ENCODE measurements at regions of chrX and their contacts with region 1.

Region 1: GRCh38 chrX:96770315-96770714 is 85.7 kb downstream of the DIAPH2 start:
- DNase-seq: peak; percentile 11

Region 2: GRCh38 chrX:94977562-94977961 is 1792.8 kb before region 1 on chrX:
- CTCF ChIA-PET with region 1: no interaction called
- POLR2A ChIA-PET with region 1: no interaction called
- DNase-seq: no peak

Region 3: GRCh38 chrX:96752781-96753180 is 17.5 kb before region 1 on chrX:
- CTCF ChIA-PET with region 1: no interaction called
- POLR2A ChIA-PET with region 1: no interaction called
- DNase-seq: no peak

Region 4: DNA sequence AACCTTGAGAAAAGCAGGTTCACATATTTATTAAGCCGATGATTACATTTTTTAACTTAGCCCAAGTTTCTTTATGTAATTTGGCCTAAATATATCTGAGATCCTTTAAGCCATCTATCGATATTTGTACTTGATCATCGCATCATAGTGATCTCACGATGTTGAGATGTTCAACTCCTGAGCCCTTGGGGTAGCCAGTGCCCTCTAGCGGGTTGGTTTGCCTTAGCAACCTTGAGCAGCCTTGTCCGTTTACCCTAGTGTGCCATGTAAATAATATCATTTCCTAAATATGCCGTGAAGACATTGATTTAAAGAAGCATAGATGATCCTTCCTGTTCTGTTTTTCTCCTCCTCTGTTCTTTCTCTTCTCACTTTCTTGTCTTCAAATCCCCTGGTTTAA is 545.6 kb after region 1 on chrX:
- CTCF ChIA-PET with region 1: interaction called, 13 read pairs
- POLR2A ChIA-PET with region 1: no interaction called
- DNase-seq: peak; percentile 45